Mammary epithelial cell (primary cell): ENCODE measurements at regions of chr10 and their contacts with region 1.

Region 1: GRCh38 chr10:101141616-101142532 is 10.8 kb downstream of the TLX1 start:
- DNase-seq: peak; percentile 74
- H3K4me3 ChIP-seq: no peak overlapping the region
- H3K27ac ChIP-seq: no peak overlapping the region
- H3K4me1 ChIP-seq: peaks cover 13% of the 10 kb centered on the region
- H3K27me3 ChIP-seq: peaks cover 30% of the 10 kb centered on the region
- CTCF ChIP-seq: peak; percentile 92 to 97

Region 2: DNA sequence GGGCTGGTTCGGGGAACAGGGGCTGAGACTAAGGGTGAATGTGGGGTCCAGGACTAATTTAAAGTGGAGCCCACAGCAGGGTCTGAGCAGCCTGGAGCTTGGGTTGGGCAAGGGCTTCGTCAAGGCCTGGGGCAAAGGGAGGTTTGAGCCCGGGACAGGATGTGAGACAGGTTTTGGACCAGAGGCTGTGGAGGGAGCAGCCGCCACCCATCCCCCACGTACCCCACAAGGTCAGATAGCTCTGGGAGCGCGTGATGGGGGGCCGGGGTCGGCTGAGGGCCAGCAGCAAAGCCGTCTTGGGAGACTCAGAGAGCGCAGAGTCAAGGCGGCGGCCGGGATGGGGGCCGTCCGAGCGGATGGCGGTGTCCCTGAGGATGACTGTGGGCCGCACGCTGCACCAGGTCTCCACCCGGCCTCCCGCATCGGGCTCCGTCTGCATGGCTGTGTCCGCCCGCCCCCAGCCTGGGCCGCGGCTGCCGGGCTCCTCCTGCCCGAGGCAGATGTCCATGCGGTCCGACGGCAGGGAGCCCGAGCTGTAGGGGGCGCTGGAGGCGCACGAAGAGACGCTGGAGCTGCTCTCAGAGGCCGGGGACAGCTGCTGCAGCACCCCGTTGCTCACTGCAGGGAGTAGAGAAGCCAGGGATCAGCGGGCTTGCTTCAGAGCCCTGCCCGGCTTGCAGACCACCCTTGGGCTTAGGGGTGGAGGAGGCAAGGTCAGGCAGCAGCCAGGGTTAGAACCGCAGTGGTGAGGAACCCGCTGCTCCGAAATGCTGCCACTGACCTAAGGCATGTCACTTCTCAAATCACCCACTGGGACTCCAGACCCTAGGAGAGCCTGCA is 123.1 kb before region 1 on chr10:
- CTCF ChIA-PET with region 1: no interaction called
- dilution Hi-C with region 1: no loop called
- in situ Hi-C with region 1: no loop called
- intact Hi-C with region 1: loop called (anchors 1 kb)
- DNase-seq: peak; percentile 71
- H3K4me3 ChIP-seq: peak overlapping the region in 1 of 3 experiments; percentile 2
- H3K27ac ChIP-seq: no peak overlapping the region
- H3K4me1 ChIP-seq: peaks cover 25% of the 10 kb centered on the region
- H3K27me3 ChIP-seq: no peaks in the 10 kb centered on the region
- CTCF ChIP-seq: peak; percentile 64 to 83

Region 3: DNA sequence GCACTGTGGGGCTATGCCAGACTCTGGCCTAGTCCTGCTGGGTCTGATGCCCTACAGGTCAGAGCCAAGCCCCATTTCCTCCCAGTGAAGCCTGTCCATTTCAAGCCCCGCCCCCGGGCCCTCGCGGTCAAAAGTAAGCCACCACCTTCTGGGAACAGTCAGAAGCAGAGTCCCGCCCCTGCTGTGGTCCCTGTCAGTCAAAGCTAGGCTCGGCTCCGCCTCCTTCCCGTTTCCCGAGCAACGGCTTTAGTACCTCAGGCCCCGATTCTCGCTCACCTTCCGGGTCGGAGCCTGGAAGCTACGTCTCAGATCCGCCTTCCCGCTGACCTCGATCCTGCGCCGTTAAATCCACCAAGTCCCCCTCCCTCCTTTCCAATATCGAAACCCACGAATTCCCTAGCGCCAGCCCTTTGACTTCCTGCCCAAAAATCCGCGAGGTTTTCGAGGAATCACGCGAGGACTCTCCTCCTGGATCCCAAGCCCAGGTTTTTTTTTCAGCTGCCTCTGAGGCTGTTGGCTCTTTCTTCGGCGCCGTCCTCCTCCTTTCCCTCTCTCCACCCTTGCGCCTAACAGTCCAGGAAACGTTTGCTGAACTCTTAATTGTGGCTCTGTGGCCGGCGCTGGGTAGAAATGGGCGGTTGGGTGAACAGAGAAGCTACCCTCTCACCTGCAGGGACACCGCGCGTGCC is 99.1 kb before region 1 on chr10:
- CTCF ChIA-PET with region 1: no interaction called
- dilution Hi-C with region 1: no loop called
- in situ Hi-C with region 1: no loop called
- intact Hi-C with region 1: loop called (anchors 2 kb)
- DNase-seq: peak; percentile 96
- H3K4me3 ChIP-seq: peak overlapping the region; percentile 44 to 56 (median 54)
- H3K27ac ChIP-seq: peak overlapping the region; percentile 86
- H3K4me1 ChIP-seq: peaks cover 39% of the 10 kb centered on the region
- H3K27me3 ChIP-seq: no peaks in the 10 kb centered on the region
- CTCF ChIP-seq: no peak

Region 4: DNA sequence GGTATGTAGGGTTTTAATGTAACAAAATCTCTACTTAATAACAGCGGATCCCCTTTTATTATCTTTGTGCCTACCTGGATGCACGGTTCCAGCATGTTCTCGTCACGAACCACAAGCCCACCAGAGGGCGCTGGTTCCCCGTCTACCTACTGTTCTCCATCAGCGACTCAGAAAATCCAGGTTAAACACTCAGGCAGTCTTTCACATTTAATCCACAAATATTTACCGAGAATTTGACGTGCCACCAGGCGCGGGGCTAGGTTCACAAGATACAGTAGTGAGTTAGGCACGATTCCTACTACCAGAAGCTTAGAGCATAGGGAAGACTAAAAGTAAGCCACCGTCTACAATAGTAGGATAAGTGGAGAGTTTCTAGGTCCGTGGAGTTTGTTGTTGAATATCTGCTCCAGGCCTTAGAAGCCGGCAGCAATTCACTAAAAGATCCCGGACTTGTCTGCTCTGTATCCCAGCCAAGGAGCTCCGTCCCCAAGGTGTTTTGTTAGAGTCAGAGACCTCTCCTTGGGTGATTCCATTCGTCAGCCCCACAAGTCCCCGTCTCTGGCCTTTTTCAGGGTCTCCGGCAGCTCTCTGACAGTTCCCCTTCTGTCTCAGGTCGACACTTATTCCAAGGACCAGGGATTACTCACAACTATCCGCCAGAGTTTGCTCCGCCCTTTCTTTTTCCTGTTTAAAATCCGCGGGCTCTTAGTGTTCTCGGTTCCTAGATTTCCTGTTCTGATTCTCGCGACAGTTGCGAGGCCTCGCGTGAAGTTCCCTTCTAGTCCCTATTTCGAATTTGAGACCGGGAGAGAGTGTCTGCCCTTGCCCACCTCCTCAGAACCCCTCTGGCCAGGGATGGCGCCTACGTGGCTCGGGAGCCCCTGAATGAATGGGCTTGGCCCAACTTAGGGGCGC is 81.6 kb before region 1 on chr10:
- CTCF ChIA-PET with region 1: no interaction called
- dilution Hi-C with region 1: no loop called
- in situ Hi-C with region 1: no loop called
- intact Hi-C with region 1: loop called (anchors 1 kb)
- DNase-seq: peak; percentile 93
- H3K4me3 ChIP-seq: peak overlapping the region; percentile 80 to 100 (median 81)
- H3K27ac ChIP-seq: peak overlapping the region; percentile 95
- H3K4me1 ChIP-seq: peaks cover 25% of the 10 kb centered on the region
- H3K27me3 ChIP-seq: no peaks in the 10 kb centered on the region
- CTCF ChIP-seq: peak; percentile 88 to 95

Region 5: DNA sequence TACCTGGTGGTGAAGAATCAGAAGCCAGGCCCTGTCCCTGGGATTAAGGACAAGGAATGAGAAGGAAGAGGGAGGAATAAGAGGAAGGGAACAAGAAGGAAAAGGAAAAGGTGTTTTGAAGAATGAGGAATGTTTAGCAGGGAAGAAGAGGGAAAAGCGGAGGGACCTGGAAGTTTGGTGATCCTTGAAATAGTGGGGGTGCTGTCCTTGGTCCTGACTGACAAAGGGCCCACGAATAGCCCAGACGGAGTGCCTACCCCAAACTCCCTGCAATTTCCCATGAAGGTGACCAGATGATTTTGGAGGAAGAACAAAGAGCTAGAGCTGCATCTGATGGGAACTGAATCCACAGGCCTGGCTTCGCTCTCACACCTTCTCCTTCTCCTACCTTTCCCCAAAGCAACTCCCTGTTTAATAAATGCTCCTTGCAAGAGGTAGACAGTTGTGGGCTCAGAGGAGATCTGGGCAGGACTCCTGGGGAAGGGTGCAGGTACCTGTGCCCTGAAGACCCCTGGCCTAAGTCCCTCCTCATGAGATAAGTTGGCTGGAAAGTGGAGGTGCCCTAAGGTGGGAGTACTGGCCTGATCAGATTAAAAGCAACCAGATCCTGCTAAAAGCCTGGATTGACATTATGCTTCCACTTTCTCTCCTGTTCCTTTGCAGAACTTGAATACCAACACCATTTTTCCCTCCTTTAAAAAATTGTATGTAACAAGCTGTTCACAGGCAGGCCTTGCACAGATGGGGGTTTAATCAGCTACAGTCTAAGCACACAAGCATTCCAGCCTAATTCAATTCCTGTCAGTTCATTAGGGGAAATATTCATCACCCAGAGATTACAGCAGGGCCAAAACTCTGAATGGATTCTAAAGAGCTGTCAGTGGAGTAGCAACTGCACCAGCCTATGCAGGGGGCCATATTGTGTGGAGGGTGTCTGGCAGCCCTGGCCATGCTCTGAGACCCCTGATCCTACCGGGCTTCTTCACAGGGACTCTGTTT is 60.6 kb before region 1 on chr10:
- CTCF ChIA-PET with region 1: no interaction called
- dilution Hi-C with region 1: loop called (anchors 5 kb)
- in situ Hi-C with region 1: no loop called
- intact Hi-C with region 1: no loop called
- DNase-seq: no peak
- H3K4me3 ChIP-seq: no peak overlapping the region
- H3K27ac ChIP-seq: no peak overlapping the region
- H3K4me1 ChIP-seq: peaks cover 7% of the 10 kb centered on the region
- H3K27me3 ChIP-seq: no peaks in the 10 kb centered on the region
- CTCF ChIP-seq: no peak

Region 6: GRCh38 chr10:101095542-101096213 is 46.2 kb before region 1 on chr10:
- CTCF ChIA-PET with region 1: interaction called, 53 read pairs
- dilution Hi-C with region 1: no loop called
- in situ Hi-C with region 1: loop called (anchors 5 kb)
- intact Hi-C with region 1: loop called (anchors 1 kb)
- DNase-seq: peak; percentile 82
- H3K4me3 ChIP-seq: no peak overlapping the region
- H3K27ac ChIP-seq: no peak overlapping the region
- H3K4me1 ChIP-seq: peaks cover 24% of the 10 kb centered on the region
- H3K27me3 ChIP-seq: no peaks in the 10 kb centered on the region
- CTCF ChIP-seq: peak; percentile 95

Region 7: GRCh38 chr10:101103430-101103829 is 38.4 kb before region 1 on chr10:
- CTCF ChIA-PET with region 1: interaction called, 3 read pairs
- dilution Hi-C with region 1: no loop called
- in situ Hi-C with region 1: loop called (anchors 5 kb)
- intact Hi-C with region 1: no loop called
- DNase-seq: no peak
- H3K4me3 ChIP-seq: no peak overlapping the region
- H3K27ac ChIP-seq: no peak overlapping the region
- H3K4me1 ChIP-seq: peaks cover 12% of the 10 kb centered on the region
- H3K27me3 ChIP-seq: no peaks in the 10 kb centered on the region
- CTCF ChIP-seq: no peak